CD8-positive, alpha-beta T cell (primary cell): ENCODE measurements at regions of chr9 and their contacts with region 1.

Region 1: GRCh38 chr9:95981761-95982390 is 106.4 kb downstream of the ERCC6L2 start:
- DNase-seq: peak in 5 of 9 experiments; percentile 18 to 75 (median 39)
- ATAC-seq: peak; percentile 92
- H3K4me3 ChIP-seq: no peak overlapping the region
- H3K4me3 Mint-ChIP-seq: peak overlapping the region; percentile 47
- H3K27ac ChIP-seq: peak overlapping the region in 1 of 2 experiments; percentile 66
- H3K27ac Mint-ChIP-seq: peak overlapping the region; percentile 89
- H3K4me1 ChIP-seq: peaks cover 21% of the 10 kb centered on the region
- H3K4me1 Mint-ChIP-seq: peaks cover 30% of the 10 kb centered on the region
- H3K27me3 ChIP-seq: no peaks in the 10 kb centered on the region
- H3K27me3 Mint-ChIP-seq: no peaks in the 10 kb centered on the region
- CTCF ChIP-seq: no peak

Region 2: DNA sequence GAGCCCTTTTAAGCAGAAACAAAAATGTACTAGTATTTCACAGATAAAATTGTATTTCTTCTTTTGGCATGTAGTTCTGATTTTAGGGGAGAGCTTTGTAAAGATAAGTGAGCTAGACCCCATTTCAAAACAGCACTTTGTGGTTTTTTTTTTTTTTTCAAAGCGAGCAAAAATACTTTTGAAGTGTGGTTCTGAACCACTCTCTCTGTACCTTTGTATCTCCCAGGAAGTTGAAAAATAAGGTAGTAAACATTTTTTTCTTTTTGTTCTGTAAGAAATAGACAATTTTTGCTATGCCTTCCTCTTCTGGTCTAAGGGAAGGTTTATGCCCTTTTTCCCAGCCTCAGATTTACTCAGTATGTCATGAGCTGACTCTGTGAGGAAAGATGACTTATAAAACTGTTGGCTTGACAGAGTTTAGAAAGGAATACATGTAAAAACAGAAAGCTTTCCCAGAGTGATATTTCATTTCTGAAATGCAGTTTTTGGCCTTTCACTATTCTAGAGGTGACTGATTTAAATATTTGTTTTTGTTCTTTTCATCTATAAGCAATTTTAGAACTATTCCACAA is 93.9 kb before region 1 on chr9:
- CTCF ChIA-PET with region 1: no interaction called
- POLR2A ChIA-PET with region 1: no interaction called
- intact Hi-C with region 1: loop called in 1 of 2 experiments (anchors 1 kb)
- DNase-seq: peak in 2 of 9 experiments; percentile 39 to 69
- ATAC-seq: peak; percentile 80
- H3K4me3 ChIP-seq: peak overlapping the region in 1 of 2 experiments; percentile 25
- H3K4me3 Mint-ChIP-seq: peak overlapping the region; percentile 71
- H3K27ac ChIP-seq: peak overlapping the region; percentile 14 to 63
- H3K27ac Mint-ChIP-seq: peak overlapping the region; percentile 88
- H3K4me1 ChIP-seq: peaks cover 80% of the 10 kb centered on the region
- H3K4me1 Mint-ChIP-seq: peaks cover 79% of the 10 kb centered on the region
- H3K27me3 ChIP-seq: no peaks in the 10 kb centered on the region
- H3K27me3 Mint-ChIP-seq: no peaks in the 10 kb centered on the region
- CTCF ChIP-seq: no peak

Region 3: GRCh38 chr9:95923794-95924193 is 58.1 kb before region 1 on chr9:
- CTCF ChIA-PET with region 1: no interaction called
- POLR2A ChIA-PET with region 1: no interaction called
- intact Hi-C with region 1: loop called in 1 of 2 experiments (anchors 10 kb)
- DNase-seq: no peak
- ATAC-seq: no peak
- H3K4me3 ChIP-seq: no peak overlapping the region
- H3K4me3 Mint-ChIP-seq: no peak overlapping the region
- H3K27ac ChIP-seq: no peak overlapping the region
- H3K27ac Mint-ChIP-seq: no peak overlapping the region
- H3K4me1 ChIP-seq: no peaks in the 10 kb centered on the region
- H3K4me1 Mint-ChIP-seq: peaks cover 11% of the 10 kb centered on the region
- H3K27me3 ChIP-seq: no peaks in the 10 kb centered on the region
- H3K27me3 Mint-ChIP-seq: no peaks in the 10 kb centered on the region
- CTCF ChIP-seq: no peak

Region 4: DNA sequence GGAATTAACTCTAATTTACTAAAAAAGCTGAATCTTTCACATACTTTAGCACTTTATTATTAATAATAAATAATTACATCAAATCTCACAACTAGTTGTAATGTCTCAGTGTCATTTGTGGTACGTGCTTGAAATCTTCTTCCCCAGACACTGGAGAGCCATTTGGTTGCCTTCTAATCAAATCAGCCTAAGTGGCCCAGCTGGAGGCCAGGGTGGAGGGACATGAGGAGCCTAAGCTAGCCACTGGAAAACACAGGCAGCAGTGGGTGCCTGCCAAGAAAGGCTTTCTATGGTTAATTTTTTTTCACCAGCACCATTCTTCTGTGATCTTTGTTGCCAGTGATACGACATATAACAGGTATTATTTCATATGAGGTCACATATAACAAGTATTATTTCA is 10.7 kb after region 1 on chr9:
- CTCF ChIA-PET with region 1: no interaction called
- POLR2A ChIA-PET with region 1: no interaction called
- intact Hi-C with region 1: no loop called
- DNase-seq: no peak
- ATAC-seq: no peak
- H3K4me3 ChIP-seq: no peak overlapping the region
- H3K4me3 Mint-ChIP-seq: no peak overlapping the region
- H3K27ac ChIP-seq: no peak overlapping the region
- H3K27ac Mint-ChIP-seq: no peak overlapping the region
- H3K4me1 ChIP-seq: no peaks in the 10 kb centered on the region
- H3K4me1 Mint-ChIP-seq: peaks cover 4% of the 10 kb centered on the region
- H3K27me3 ChIP-seq: no peaks in the 10 kb centered on the region
- H3K27me3 Mint-ChIP-seq: no peaks in the 10 kb centered on the region
- CTCF ChIP-seq: no peak

Region 5: GRCh38 chr9:96009690-96010472 is 28.0 kb after region 1 on chr9:
- CTCF ChIA-PET with region 1: no interaction called
- POLR2A ChIA-PET with region 1: interaction called, 3 read pairs
- intact Hi-C with region 1: loop called in 1 of 2 experiments (anchors 2 kb)
- DNase-seq: peak; percentile 54 to 85 (median 65)
- ATAC-seq: peak; percentile 75
- H3K4me3 ChIP-seq: no peak overlapping the region
- H3K4me3 Mint-ChIP-seq: peak overlapping the region; percentile 42
- H3K27ac ChIP-seq: peak overlapping the region; percentile 75 to 83
- H3K27ac Mint-ChIP-seq: no peak overlapping the region
- H3K4me1 ChIP-seq: peaks cover 72% of the 10 kb centered on the region
- H3K4me1 Mint-ChIP-seq: peaks cover 13% of the 10 kb centered on the region
- H3K27me3 ChIP-seq: no peaks in the 10 kb centered on the region
- H3K27me3 Mint-ChIP-seq: no peaks in the 10 kb centered on the region
- CTCF ChIP-seq: no peak

Region 6: DNA sequence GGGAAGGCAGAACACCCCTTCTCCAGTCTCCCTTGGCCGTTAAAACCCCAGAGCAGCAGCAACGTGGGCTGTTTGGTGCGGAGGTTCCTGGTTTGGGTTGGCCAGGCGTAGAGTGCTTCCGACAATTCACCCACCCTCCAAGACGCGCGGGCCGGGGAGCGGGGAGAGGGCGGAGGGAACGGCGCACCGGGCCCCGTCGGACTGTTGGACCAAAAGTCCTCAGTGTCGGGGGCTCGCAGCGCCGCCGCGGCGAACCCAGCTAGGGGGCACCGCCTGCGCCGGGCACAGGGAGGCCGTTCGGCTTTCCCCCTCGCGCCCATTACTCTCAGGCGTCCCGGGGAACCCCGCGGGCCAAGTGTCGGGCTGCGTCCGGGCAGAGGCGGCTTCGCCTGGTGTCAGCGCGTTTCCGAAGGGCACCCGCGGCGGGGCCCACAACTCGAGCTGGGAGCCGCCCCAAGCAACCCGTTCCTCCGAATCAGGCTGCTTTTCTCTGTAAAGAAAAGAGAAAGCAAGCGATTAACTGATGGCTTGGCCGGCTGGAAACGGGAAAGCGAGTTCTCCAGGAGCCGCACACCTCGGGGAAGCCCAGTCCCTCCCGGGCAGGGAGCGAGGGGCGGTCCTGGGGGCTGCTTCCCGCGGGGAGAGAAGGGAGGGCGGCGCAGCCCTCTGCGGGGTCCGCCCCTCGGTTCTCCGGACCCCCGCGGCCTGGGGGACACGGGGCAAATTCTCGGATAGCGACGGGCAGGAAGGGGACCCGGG is 39.1 kb after region 1 on chr9:
- CTCF ChIA-PET with region 1: no interaction called
- POLR2A ChIA-PET with region 1: no interaction called
- intact Hi-C with region 1: loop called (anchors 2 kb)
- DNase-seq: peak in 7 of 9 experiments; percentile 39 to 72 (median 61)
- ATAC-seq: peak; percentile 43
- H3K4me3 ChIP-seq: peak overlapping the region; percentile 61 to 69
- H3K4me3 Mint-ChIP-seq: peak overlapping the region; percentile 90
- H3K27ac ChIP-seq: peak overlapping the region; percentile 74 to 80
- H3K27ac Mint-ChIP-seq: peak overlapping the region; percentile 89
- H3K4me1 ChIP-seq: peaks cover 54% of the 10 kb centered on the region
- H3K4me1 Mint-ChIP-seq: peaks cover 74% of the 10 kb centered on the region
- H3K27me3 ChIP-seq: no peaks in the 10 kb centered on the region
- H3K27me3 Mint-ChIP-seq: no peaks in the 10 kb centered on the region
- CTCF ChIP-seq: no peak

Region 7: DNA sequence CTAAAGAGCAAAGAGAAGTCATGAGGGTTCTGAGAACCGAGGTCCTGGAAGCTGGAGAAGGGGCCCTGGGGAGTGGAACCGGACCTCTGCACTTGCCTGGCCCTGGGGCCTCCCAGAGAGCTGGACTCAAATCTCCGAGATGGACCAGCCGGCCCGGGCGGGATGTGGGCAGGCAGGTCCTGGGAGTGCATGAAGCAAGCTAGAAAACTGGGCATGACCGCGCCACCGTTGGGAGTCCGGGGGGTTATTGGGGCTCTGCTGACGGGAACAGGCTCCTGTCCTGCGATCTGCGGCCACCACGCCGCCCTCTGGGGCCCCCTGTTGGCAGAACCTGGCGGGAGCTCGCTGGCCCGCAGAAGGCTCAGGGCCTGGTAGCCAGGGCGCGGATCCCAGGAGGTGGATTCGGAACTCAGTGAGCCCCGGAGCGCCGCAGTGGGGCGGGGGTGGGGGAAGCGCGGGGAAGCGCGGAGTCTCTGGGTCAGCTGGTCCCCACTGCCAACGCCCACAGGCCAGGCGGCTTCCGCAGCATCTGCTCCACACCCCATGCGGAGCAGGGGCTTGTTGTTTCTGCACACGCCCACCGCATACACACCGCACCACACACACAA is 44.2 kb after region 1 on chr9:
- CTCF ChIA-PET with region 1: no interaction called
- POLR2A ChIA-PET with region 1: no interaction called
- intact Hi-C with region 1: loop called in 1 of 2 experiments (anchors 2 kb)
- DNase-seq: peak in 2 of 9 experiments; percentile 29 to 35
- ATAC-seq: no peak
- H3K4me3 ChIP-seq: no peak overlapping the region
- H3K4me3 Mint-ChIP-seq: peak overlapping the region; percentile 13
- H3K27ac ChIP-seq: no peak overlapping the region
- H3K27ac Mint-ChIP-seq: peak overlapping the region; percentile 2
- H3K4me1 ChIP-seq: peaks cover 32% of the 10 kb centered on the region
- H3K4me1 Mint-ChIP-seq: peaks cover 43% of the 10 kb centered on the region
- H3K27me3 ChIP-seq: peaks cover 0 to 6% of the 10 kb centered on the region in 2 experiments
- H3K27me3 Mint-ChIP-seq: peaks cover 4% of the 10 kb centered on the region
- CTCF ChIP-seq: no peak

Region 8: GRCh38 chr9:96177005-96177718 is 195.3 kb after region 1 on chr9:
- CTCF ChIA-PET with region 1: no interaction called
- POLR2A ChIA-PET with region 1: no interaction called
- intact Hi-C with region 1: no loop called
- DNase-seq: no peak
- ATAC-seq: no peak
- H3K4me3 ChIP-seq: no peak overlapping the region
- H3K4me3 Mint-ChIP-seq: no peak overlapping the region
- H3K27ac ChIP-seq: no peak overlapping the region
- H3K27ac Mint-ChIP-seq: no peak overlapping the region
- H3K4me1 ChIP-seq: no peaks in the 10 kb centered on the region
- H3K4me1 Mint-ChIP-seq: no peaks in the 10 kb centered on the region
- H3K27me3 ChIP-seq: no peaks in the 10 kb centered on the region
- H3K27me3 Mint-ChIP-seq: peaks cover 28% of the 10 kb centered on the region
- CTCF ChIP-seq: no peak

Region 9: DNA sequence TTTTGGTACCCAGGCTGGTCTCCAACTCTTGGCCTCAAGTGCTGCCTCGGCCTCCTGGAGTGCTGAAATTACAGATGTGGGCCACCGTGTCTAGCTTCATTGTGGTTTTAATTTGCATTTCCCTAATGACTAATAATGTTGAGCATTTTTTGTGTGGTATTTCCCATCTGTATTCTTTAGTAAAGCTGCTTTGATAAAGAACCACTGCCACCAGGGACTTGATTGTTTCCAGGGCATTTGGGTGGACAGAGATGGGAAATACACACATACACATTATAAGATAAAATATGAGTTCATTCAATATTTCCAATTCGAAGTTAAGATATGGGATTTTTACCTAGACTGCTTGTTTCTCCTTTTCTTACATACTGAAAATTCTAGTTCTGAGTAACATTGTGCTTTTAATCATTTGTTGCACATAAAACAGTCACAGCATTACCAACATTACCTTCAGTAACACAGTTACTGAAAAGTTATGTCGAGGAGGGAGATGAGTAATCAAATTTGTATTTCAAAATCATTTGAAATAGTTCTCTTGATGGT is 497.0 kb after region 1 on chr9:
- CTCF ChIA-PET with region 1: no interaction called
- POLR2A ChIA-PET with region 1: no interaction called
- intact Hi-C with region 1: no loop called
- DNase-seq: no peak
- ATAC-seq: no peak
- H3K4me3 ChIP-seq: no peak overlapping the region
- H3K4me3 Mint-ChIP-seq: no peak overlapping the region
- H3K27ac ChIP-seq: no peak overlapping the region
- H3K27ac Mint-ChIP-seq: no peak overlapping the region
- H3K4me1 ChIP-seq: no peaks in the 10 kb centered on the region
- H3K4me1 Mint-ChIP-seq: peaks cover 1% of the 10 kb centered on the region
- H3K27me3 ChIP-seq: no peaks in the 10 kb centered on the region
- H3K27me3 Mint-ChIP-seq: no peaks in the 10 kb centered on the region
- CTCF ChIP-seq: no peak